CD14-positive monocyte (primary cell): ENCODE measurements at regions of chr14 and their contacts with region 1.

Region 1: GRCh38 chr14:68734231-68734775 is 58.6 kb downstream of the ZFP36L1 start:
- DNase-seq: peak; percentile 92 to 96 (median 95)
- H3K4me3 ChIP-seq: peak overlapping the region in 1 of 3 experiments; percentile 15
- H3K4me3 Mint-ChIP-seq: peak overlapping the region; percentile 34 to 64
- H3K27ac ChIP-seq: peak overlapping the region; percentile 97 to 99
- H3K27ac Mint-ChIP-seq: peak overlapping the region; percentile 98 to 100 (median 99)
- H3K4me1 ChIP-seq: peaks cover 45 to 50% of the 10 kb centered on the region in 2 donors
- H3K4me1 Mint-ChIP-seq: peaks cover 64% of the 10 kb centered on the region
- H3K27me3 ChIP-seq: peaks cover 20 to 39% of the 10 kb centered on the region in 2 donors
- H3K27me3 Mint-ChIP-seq: peaks cover 46 to 61% (median 46%) of the 10 kb centered on the region in 3 donors
- CTCF ChIP-seq: no peak

Region 2: GRCh38 chr14:68548194-68549056 is 185.9 kb before region 1 on chr14:
- intact Hi-C with region 1: no loop called
- DNase-seq: no peak
- H3K4me3 ChIP-seq: no peak overlapping the region
- H3K4me3 Mint-ChIP-seq: no peak overlapping the region
- H3K27ac ChIP-seq: no peak overlapping the region
- H3K27ac Mint-ChIP-seq: peak overlapping the region in 1 of 7 donors; percentile 44
- H3K4me1 ChIP-seq: peaks cover 16 to 31% of the 10 kb centered on the region in 2 donors
- H3K4me1 Mint-ChIP-seq: peaks cover 34% of the 10 kb centered on the region
- H3K27me3 ChIP-seq: no peaks in the 10 kb centered on the region
- H3K27me3 Mint-ChIP-seq: peaks cover 0 to 3% (median 1%) of the 10 kb centered on the region in 3 donors
- CTCF ChIP-seq: no peak

Region 3: DNA sequence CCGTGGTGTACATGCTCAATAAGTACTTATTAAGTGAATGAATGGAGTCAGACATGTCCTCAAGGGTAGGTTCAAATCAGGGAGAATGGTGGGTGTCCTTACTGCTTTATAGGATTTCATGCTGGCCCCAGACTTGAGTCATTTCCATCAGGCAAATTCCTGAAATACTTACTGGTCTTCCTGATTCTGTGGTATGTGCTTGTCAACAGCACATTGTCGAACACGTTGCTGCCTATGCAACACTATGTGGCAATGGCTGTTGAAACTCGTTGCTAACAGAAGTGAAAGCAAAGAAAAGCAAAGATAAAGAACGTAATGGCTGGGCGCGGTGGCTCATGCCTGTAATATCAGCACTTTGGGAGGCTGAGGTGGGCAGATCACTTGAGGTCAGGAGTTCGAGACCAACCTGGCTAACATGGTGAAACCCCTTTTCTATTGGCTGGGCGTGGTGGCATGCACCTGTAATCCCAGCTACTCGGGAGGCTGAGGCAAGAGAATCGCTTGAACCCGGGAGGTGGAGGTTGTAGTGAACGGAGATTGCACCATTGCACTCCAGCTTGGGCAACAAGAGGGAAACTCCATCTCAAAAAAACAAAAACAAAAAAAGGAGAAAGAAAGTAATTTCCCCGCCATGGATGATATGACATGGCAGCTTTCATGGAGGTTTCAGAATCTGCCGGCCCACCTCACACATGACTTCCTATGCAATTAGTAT is 156.3 kb before region 1 on chr14:
- intact Hi-C with region 1: loop called in 1 of 2 experiments (anchors 5 kb)
- DNase-seq: peak; percentile 94 to 99 (median 97)
- H3K4me3 ChIP-seq: peak overlapping the region in 1 of 3 experiments; percentile 2
- H3K4me3 Mint-ChIP-seq: peak overlapping the region; percentile 64 to 85
- H3K27ac ChIP-seq: peak overlapping the region; percentile 89 to 92
- H3K27ac Mint-ChIP-seq: peak overlapping the region; percentile 99 to 100 (median 100)
- H3K4me1 ChIP-seq: peaks cover 65 to 68% of the 10 kb centered on the region in 2 donors
- H3K4me1 Mint-ChIP-seq: peaks cover 68% of the 10 kb centered on the region
- H3K27me3 ChIP-seq: no peaks in the 10 kb centered on the region
- H3K27me3 Mint-ChIP-seq: peaks cover 0 to 2% (median 2%) of the 10 kb centered on the region in 3 donors
- CTCF ChIP-seq: no peak

Region 4: GRCh38 chr14:68663385-68664076 is 70.8 kb before region 1 on chr14:
- intact Hi-C with region 1: no loop called
- DNase-seq: no peak
- H3K4me3 ChIP-seq: no peak overlapping the region
- H3K4me3 Mint-ChIP-seq: no peak overlapping the region
- H3K27ac ChIP-seq: no peak overlapping the region
- H3K27ac Mint-ChIP-seq: no peak overlapping the region
- H3K4me1 ChIP-seq: no peaks in the 10 kb centered on the region
- H3K4me1 Mint-ChIP-seq: peaks cover 9% of the 10 kb centered on the region
- H3K27me3 ChIP-seq: no peaks in the 10 kb centered on the region
- H3K27me3 Mint-ChIP-seq: peaks cover 0 to 11% (median 4%) of the 10 kb centered on the region in 3 donors
- CTCF ChIP-seq: no peak